Ascending aorta (tissue), 2 donors: ENCODE measurements at regions of chr1 and their contacts with region 1.

Region 1: DNA sequence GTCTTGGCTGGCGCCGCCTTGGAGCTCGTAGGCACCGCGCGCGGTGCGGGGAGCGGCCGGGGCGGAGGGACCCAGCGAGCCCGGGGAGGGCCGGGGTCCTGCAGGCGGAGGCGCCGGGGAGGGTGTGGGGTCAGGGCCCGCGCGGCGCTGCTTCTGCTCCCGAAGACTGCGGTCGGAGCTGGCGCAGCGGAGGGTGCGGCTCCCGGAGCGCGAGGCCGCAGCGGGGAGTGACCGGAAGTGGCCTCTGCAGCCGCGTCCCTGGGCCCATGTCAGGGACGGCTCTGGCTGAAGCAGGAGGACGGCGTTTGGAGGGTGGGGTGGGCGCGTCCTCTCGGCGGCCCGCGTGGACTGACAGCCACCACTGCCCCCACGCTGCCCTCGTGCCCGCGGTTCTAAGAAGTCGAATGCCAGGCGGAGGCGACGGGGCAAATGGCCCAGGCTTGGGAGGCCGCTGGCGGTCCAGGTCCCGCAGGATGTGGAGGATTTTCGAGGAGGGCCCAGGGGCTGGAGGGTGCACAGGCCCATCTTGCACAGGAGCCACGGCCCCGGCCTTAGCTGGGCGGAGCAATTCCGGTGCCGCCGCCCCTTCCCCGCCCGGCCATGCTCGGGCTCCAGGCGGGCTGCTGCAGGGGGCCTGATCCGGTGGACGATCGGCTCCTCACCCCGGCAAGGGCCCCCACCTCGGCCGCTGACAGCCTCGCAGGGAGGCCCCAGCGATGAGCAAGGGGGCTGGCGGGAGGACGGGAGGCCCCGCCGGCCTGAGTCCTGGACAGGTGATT is 7.7 kb upstream of the ZNF669 start:
- DNase-seq: peak in 1 of 2 donors; percentile 79
- H3K4me3 ChIP-seq: peak overlapping the region; percentile 85 to 88
- H3K27ac ChIP-seq: peak overlapping the region; percentile 75 to 83
- H3K4me1 ChIP-seq: peaks cover 6 to 7% of the 10 kb centered on the region in 2 donors
- H3K27me3 ChIP-seq: no peaks in the 10 kb centered on the region
- CTCF ChIP-seq: no peak

Region 2: DNA sequence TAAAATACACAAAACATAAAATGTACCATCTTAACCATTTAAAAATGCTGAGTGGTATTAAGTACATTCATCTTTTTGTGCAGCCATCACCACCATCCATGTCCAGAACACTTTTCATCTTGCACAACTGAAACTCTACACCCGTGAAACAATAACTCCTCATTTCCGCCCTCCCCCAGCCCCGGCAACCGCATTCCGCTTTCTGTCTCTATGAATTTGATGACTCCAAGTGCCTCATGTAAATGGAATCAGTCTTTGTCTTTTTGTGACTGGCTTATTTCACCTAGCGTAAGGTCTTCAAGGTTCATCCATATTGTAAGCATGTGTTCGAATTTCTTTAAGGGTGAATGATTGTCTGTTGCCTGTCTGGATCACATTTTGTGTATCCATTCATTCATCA is 350.5 kb before region 1 on chr1:
- intact Hi-C with region 1: no loop called
- DNase-seq: no peak
- H3K4me3 ChIP-seq: no peak overlapping the region
- H3K27ac ChIP-seq: no peak overlapping the region
- H3K4me1 ChIP-seq: no peaks in the 10 kb centered on the region
- H3K27me3 ChIP-seq: no peaks in the 10 kb centered on the region
- CTCF ChIP-seq: no peak

Region 3: DNA sequence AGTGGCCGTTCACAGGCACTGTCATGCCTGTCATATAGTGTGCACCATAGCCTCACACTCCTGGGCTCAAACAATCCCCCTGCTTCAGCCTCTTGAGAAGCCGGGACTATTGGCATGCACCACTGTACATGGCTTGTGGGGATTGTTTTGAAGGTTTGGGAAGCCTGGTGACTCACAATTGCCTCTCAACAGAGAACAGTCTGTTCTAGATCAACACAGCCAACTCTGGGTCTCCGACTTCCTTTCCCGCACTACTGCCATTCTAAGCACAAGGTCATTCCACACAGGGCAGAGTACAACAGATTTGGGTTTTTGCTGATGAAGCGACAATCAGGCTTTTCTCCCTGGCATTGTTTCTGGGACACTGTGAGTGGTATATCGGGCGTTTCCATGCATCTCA is 164.6 kb before region 1 on chr1:
- intact Hi-C with region 1: loop called (anchors 5 kb)
- DNase-seq: peak; percentile 67 to 94
- H3K4me3 ChIP-seq: peak overlapping the region in 1 of 2 donors; percentile 8
- H3K27ac ChIP-seq: peak overlapping the region; percentile 80 to 89
- H3K4me1 ChIP-seq: peaks cover 8 to 21% of the 10 kb centered on the region in 2 donors
- H3K27me3 ChIP-seq: no peaks in the 10 kb centered on the region
- CTCF ChIP-seq: no peak

Region 4: DNA sequence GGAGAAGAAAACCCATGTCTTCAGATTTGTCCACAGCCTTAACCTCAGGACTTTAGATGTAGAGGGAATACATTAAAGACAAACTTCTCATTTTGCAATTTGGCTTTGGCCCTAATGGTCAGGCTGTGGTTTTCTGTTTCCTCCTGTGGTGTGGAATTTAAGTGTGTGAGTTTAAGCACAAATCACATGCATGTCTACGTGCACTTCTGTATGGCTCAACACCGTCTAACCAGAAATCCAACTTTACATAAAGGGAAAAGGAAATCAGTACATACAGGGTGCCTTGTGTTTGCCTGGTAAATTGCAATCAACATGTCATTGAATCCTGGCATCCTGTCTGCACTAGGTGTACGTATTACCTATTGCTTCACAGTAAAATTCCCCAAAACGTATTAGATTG is 61.1 kb after region 1 on chr1:
- intact Hi-C with region 1: loop called (anchors 5 kb)
- DNase-seq: no peak
- H3K4me3 ChIP-seq: no peak overlapping the region
- H3K27ac ChIP-seq: no peak overlapping the region
- H3K4me1 ChIP-seq: no peaks in the 10 kb centered on the region
- H3K27me3 ChIP-seq: no peaks in the 10 kb centered on the region
- CTCF ChIP-seq: no peak

Region 5: DNA sequence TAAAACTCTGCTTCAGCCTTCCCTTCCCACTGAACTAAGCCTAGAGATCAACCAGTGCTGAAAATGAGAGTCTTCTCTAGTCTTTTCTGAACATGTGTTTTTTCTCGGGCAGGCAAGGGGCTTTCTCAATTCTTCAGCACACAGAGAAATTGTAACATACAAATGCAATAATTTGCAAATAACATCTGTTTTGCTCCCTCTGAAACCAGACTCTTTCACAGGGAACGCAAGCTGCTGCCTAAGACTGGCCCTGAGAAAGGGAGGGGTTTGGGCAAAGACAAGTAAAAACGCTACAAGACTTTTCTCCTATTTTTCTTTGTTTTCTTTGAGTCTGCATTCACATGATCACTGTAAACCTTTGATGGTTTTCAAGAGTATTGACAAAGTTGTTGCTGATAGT is 104.4 kb after region 1 on chr1:
- intact Hi-C with region 1: no loop called
- DNase-seq: no peak
- H3K4me3 ChIP-seq: no peak overlapping the region
- H3K27ac ChIP-seq: no peak overlapping the region
- H3K4me1 ChIP-seq: no peaks in the 10 kb centered on the region
- H3K27me3 ChIP-seq: no peaks in the 10 kb centered on the region
- CTCF ChIP-seq: no peak

Region 6: DNA sequence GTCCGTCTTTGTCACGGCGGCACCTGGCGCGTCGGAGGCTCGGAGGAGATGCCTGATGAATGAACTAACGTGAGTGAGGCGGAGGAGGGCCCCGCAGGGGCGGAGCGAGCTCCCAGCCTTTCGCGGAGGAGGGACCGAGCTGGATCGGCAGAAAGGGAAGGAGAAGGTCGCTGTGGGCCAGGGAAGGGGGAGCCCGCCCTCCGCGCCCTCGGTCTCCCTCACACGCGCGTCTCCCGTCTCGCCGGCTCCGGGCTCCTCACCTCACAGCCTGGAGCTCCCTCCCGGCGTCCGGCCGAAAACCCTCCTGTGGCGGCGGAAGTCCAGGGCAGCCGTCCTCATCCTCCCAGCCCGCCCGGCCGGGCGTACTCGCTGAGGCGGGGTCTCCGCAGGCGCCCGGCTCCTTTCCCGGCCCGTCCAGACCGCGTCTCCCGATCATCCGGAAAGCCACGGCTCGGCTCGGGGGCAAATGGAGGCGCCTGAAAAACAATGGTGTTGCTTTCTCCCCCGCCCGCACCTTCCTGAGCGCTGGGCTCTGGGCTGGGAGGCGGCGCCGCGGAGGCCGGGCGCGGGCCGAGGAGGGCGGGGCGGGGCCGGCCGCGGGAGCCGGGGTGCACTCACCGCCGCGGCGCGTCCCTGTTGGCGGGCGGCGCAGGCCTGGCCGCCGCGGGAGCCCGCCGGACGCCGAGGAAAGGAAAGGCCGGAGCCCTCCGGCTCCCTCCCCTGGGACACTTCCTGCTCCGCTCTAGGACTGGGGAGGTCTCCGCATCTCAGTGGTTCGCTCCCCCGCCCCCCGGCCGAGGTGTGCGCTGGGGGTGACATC is 219.5 kb after region 1 on chr1 and contains the start of gene ZNF496:
- intact Hi-C with region 1: loop called (anchors 5 kb)
- DNase-seq: peak; percentile 35 to 87
- H3K4me3 ChIP-seq: peak within 1 kb of the TSS; percentile 91 to 100
- H3K27ac ChIP-seq: peak within 1 kb of the TSS; percentile 92 to 98
- H3K4me1 ChIP-seq: peaks cover 7% of the 10 kb centered on the region in 2 donors
- H3K27me3 ChIP-seq: no peaks in the 10 kb centered on the region
- CTCF ChIP-seq: no peak
- total RNA-seq, gene ZNF496: 38.5 TPM